CD14-positive monocyte (primary cell): ENCODE measurements at regions of chr12 and their contacts with region 1.

Region 1: DNA sequence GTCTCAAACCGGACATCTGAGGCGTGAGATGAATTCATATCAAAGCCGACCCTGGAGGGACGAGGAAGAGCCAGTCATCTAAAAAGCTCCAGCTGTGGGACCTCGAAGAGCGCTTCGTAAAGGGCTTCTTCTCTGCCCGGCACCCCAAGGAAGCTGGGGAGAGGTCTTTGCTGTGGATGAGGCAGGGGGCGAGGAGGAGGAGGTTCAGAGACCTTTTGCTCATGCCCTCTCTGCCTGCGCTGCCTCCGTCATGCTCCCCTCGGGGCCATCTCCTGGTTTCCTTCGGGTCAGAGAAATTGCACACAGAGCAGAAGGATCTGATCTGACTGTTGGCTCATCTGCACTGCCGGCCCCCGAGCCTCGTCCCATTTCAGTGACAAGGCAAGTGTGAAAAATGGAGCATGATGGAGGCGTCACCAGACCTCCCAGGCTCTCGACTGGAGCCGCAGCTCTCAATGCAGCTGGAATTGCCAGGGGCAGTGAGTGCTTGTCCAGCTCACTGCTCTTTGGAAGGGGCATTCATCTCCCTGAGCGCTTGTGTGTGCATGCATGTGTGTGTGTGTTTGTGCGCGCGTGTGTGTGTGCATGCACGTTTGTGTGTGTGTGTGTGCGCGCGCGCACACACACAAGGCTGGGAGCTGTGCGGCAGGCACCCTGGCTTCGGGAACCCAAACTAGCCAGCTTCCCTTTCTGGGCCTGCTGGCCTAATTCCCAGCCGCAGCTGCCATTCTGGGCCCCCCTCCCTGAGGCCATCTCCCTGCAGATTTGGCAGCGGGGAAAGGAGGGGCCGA is 9.2 kb downstream of the CABP1 start:
- DNase-seq: peak in 1 of 3 donors; percentile 18
- H3K4me3 ChIP-seq: peak overlapping the region; percentile 2 to 69 (median 3)
- H3K4me3 Mint-ChIP-seq: peak overlapping the region; percentile 76 to 93
- H3K27ac ChIP-seq: no peak overlapping the region
- H3K27ac Mint-ChIP-seq: peak overlapping the region in 4 of 7 donors; percentile 5 to 64 (median 26)
- H3K4me1 ChIP-seq: peaks cover 52 to 59% of the 10 kb centered on the region in 2 donors
- H3K4me1 Mint-ChIP-seq: peaks cover 62% of the 10 kb centered on the region
- H3K27me3 ChIP-seq: peaks cover under 1 to 15% of the 10 kb centered on the region in 2 donors
- H3K27me3 Mint-ChIP-seq: peaks cover 22 to 41% (median 26%) of the 10 kb centered on the region in 3 donors
- CTCF ChIP-seq: peak; percentile 74

Region 2: DNA sequence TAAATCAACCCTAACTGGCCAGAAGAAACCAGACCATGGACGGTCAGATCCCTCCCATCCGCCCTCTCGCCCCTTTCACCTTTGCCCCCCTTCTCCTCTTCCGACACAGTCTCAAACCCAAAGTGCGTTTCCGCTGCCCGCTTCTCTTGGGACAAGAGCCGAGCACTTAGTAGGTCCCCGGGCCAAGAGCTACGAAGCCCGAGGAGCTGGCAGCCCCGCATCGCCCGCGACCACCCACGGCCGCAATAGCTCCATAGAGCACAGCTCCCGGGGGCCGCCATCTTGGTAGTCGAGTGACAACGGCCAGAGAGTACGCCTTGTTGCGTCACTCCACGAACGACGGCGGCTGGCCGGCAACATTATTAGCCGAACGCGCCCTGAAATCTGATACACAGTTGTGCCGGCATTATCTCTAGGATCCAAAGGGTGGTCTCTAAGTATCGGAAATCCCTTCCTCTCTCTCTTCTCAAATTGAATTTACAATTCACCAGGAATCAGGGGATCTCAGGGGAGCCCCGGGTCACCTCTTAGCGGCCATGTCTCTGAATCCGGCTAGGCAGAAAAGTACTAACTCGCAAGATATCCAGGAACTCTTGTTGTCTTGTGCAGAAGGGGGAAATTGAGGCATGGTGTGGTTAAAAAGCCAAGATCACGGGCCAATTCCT is 120.6 kb before region 1 on chr12 and contains the start of gene COQ5:
- intact Hi-C with region 1: no loop called
- DNase-seq: peak; percentile 69 to 76 (median 73)
- H3K4me3 ChIP-seq: peak within 1 kb of the TSS; percentile 89 to 99 (median 93)
- H3K4me3 Mint-ChIP-seq: peak within 1 kb of the TSS; percentile 97 to 99
- H3K27ac ChIP-seq: peak within 1 kb of the TSS; percentile 77 to 94
- H3K27ac Mint-ChIP-seq: peak within 1 kb of the TSS; percentile 97 to 99 (median 98)
- H3K4me1 ChIP-seq: peaks cover 18 to 19% of the 10 kb centered on the region in 2 donors
- H3K4me1 Mint-ChIP-seq: peaks cover 13% of the 10 kb centered on the region
- H3K27me3 ChIP-seq: no peaks in the 10 kb centered on the region
- H3K27me3 Mint-ChIP-seq: no peaks in the 10 kb centered on the region
- CTCF ChIP-seq: no peak
- polyA plus RNA-seq, gene COQ5: 9.3 to 38.9 (median 30.6) TPM

Region 3: DNA sequence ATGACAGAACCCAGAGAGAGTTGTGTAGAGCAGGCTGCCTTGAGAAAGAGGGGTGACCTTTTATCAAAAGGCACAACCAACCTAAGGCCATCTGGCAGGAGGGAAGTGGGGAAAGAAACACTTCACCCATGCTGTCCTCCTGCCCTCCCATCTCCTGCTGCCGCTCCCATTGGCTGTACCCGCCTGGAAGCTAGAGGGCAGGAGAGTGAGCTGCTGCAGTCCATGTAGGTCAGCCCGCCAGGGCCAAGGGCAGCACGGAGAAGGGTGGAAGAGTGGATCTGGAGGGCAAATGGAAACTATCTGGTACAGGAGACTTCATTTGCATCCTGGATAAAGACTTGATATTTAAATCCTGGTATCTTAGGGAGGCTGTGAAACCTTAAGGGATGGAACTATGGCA is 20.7 kb before region 1 on chr12:
- intact Hi-C with region 1: no loop called
- DNase-seq: no peak
- H3K4me3 ChIP-seq: no peak overlapping the region
- H3K4me3 Mint-ChIP-seq: no peak overlapping the region
- H3K27ac ChIP-seq: no peak overlapping the region
- H3K27ac Mint-ChIP-seq: peak overlapping the region in 1 of 7 donors; percentile 72
- H3K4me1 ChIP-seq: no peaks in the 10 kb centered on the region
- H3K4me1 Mint-ChIP-seq: peaks cover 9% of the 10 kb centered on the region
- H3K27me3 ChIP-seq: no peaks in the 10 kb centered on the region
- H3K27me3 Mint-ChIP-seq: peaks cover 0 to 10% (median 3%) of the 10 kb centered on the region in 3 donors
- CTCF ChIP-seq: no peak

Region 4: DNA sequence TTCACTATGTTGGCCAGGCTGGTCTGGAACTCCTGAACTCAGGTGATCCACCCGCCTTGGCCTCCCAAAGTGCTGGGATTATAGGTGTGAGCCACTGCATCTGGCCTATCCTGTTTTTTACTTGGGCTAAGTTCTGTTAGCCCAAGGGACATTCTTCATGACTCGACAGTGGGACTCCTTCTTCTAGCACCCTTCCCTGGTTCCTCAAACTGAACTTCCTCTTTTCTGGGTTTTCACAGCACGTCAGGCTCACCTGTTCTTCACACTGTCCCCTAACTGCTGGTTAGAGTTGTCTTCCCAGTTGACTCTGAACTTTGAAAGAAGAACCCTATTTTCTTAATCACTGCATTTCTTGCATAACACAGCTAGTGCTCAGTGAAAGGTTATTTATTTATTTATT is 13.2 kb after region 1 on chr12:
- intact Hi-C with region 1: no loop called
- DNase-seq: peak; percentile 39 to 75 (median 49)
- H3K4me3 ChIP-seq: no peak overlapping the region
- H3K4me3 Mint-ChIP-seq: no peak overlapping the region
- H3K27ac ChIP-seq: no peak overlapping the region
- H3K27ac Mint-ChIP-seq: peak overlapping the region in 1 of 7 donors; percentile 37
- H3K4me1 ChIP-seq: peaks cover 13 to 19% of the 10 kb centered on the region in 2 donors
- H3K4me1 Mint-ChIP-seq: peaks cover 12% of the 10 kb centered on the region
- H3K27me3 ChIP-seq: no peaks in the 10 kb centered on the region
- H3K27me3 Mint-ChIP-seq: peaks cover 0 to 7% (median 6%) of the 10 kb centered on the region in 3 donors
- CTCF ChIP-seq: no peak

Region 5: GRCh38 chr12:120686690-120687577 is 37.3 kb after region 1 on chr12 and contains the start of gene MLEC:
- intact Hi-C with region 1: loop called (anchors 2 to 5 kb)
- DNase-seq: peak; percentile 97 to 98 (median 98)
- H3K4me3 ChIP-seq: peak within 1 kb of the TSS; percentile 65 to 92 (median 78)
- H3K4me3 Mint-ChIP-seq: peak within 1 kb of the TSS; percentile 84 to 92
- H3K27ac ChIP-seq: peak within 1 kb of the TSS; percentile 94 to 96
- H3K27ac Mint-ChIP-seq: peak within 1 kb of the TSS; percentile 94 to 99 (median 97)
- H3K4me1 ChIP-seq: peaks cover 47 to 50% of the 10 kb centered on the region in 2 donors
- H3K4me1 Mint-ChIP-seq: peaks cover 59% of the 10 kb centered on the region
- H3K27me3 ChIP-seq: no peaks in the 10 kb centered on the region
- H3K27me3 Mint-ChIP-seq: peaks cover 0 to 2% (median 0%) of the 10 kb centered on the region in 3 donors
- CTCF ChIP-seq: no peak
- polyA plus RNA-seq, gene MLEC: 10.9 to 79.5 (median 65.3) TPM

Region 6: DNA sequence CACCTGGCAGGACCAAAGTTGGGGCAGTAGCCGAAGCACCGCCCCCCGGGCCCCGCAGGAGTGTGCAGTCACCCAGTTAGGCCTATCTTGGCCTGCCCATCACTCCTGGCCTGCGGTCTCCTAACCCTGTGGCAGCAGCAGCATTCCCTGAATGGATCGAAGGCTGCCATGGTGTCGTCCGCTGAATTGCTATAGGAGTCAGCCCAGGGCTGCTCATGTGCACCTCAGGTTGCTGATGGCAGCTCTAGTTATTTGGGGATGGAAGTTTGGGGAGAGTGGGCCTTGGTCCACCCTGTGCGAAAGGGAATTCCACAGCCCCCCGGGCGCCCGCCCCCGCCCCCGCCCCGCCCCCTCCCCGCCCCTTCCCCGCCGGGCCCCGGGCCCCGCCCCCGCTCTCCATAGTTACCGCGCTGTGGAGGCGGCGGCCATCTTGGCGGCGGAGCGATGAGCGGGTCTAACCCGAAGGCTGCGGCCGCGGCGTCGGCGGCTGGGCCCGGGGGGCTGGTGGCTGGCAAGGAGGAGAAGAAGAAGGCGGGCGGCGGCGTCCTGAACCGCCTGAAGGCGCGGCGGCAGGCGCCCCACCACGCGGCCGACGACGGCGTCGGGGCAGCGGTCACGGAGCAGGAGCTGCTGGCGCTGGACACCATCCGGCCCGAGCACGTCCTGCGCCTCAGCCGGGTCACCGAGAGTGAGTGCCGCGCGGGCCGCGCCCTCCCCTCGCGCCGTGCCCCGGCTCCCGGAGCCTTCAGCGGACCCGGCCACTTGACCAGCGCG is 60.6 kb after region 1 on chr12 and contains the start of gene UNC119B:
- intact Hi-C with region 1: loop called (anchors 1 to 5 kb)
- DNase-seq: peak; percentile 20 to 35 (median 34)
- H3K4me3 ChIP-seq: peak within 1 kb of the TSS; percentile 66 to 84 (median 69)
- H3K4me3 Mint-ChIP-seq: peak within 1 kb of the TSS; percentile 87 to 90
- H3K27ac ChIP-seq: peak within 1 kb of the TSS in 1 of 2 donors; percentile 54
- H3K27ac Mint-ChIP-seq: peak within 1 kb of the TSS in 6 of 7 donors; percentile 31 to 87 (median 72)
- H3K4me1 ChIP-seq: peaks cover 21 to 22% of the 10 kb centered on the region in 2 donors
- H3K4me1 Mint-ChIP-seq: peaks cover 22% of the 10 kb centered on the region
- H3K27me3 ChIP-seq: no peaks in the 10 kb centered on the region
- H3K27me3 Mint-ChIP-seq: peaks cover 0 to 1% (median 0%) of the 10 kb centered on the region in 3 donors
- CTCF ChIP-seq: no peak
- polyA plus RNA-seq, gene UNC119B: 1.1 to 9.1 (median 2.1) TPM